Transverse colon (tissue), 4 donors: ENCODE measurements at regions of chr13 and their contacts with region 1.

Region 1: DNA sequence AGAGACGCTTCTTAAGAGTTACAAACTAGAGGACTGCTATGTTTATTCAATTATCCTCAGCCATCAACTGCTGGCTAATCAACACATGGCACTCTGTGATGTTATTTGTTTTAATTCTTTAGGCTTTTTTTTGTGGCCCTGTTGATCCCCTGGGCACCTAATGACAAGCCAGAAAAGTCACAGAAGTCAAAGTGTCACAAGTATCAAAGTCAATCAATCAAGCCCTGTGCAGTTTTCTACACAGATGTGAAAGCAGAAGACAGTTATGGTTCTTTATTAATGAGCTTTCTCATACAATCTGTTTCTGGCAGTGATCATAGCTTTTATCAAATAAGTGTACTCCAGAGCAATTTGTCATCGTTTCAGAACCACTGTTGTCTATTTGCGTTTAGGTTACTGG is 34.3 kb downstream of the MYO16 start:
- DNase-seq: no peak
- H3K4me3 ChIP-seq: no peak overlapping the region
- H3K27ac ChIP-seq: no peak overlapping the region
- H3K4me1 ChIP-seq: no peaks in the 10 kb centered on the region
- H3K27me3 ChIP-seq: no peaks in the 10 kb centered on the region
- CTCF ChIP-seq: no peak
- EP300 ChIP-seq: no peak
- POLR2A ChIP-seq: no peak

Region 2: GRCh38 chr13:108483981-108484380 is 179.7 kb before region 1 on chr13:
- in situ Hi-C with region 1: no loop called
- intact Hi-C with region 1: no loop called
- DNase-seq: no peak
- H3K4me3 ChIP-seq: no peak overlapping the region
- H3K27ac ChIP-seq: no peak overlapping the region
- H3K4me1 ChIP-seq: no peaks in the 10 kb centered on the region
- H3K27me3 ChIP-seq: no peaks in the 10 kb centered on the region
- CTCF ChIP-seq: no peak
- EP300 ChIP-seq: no peak
- POLR2A ChIP-seq: no peak

Region 3: GRCh38 chr13:108609353-108609752 is 54.4 kb before region 1 on chr13:
- in situ Hi-C with region 1: no loop called
- intact Hi-C with region 1: loop called (anchors 1 kb)
- DNase-seq: no peak
- H3K4me3 ChIP-seq: no peak overlapping the region
- H3K27ac ChIP-seq: no peak overlapping the region
- H3K4me1 ChIP-seq: no peaks in the 10 kb centered on the region
- H3K27me3 ChIP-seq: no peaks in the 10 kb centered on the region
- CTCF ChIP-seq: peak in 3 of 5 experiments; percentile 14 to 38 (median 20)
- EP300 ChIP-seq: no peak
- POLR2A ChIP-seq: no peak